ENCODE measurements at regions of chrX and their contacts with region 1.

Region 1: DNA sequence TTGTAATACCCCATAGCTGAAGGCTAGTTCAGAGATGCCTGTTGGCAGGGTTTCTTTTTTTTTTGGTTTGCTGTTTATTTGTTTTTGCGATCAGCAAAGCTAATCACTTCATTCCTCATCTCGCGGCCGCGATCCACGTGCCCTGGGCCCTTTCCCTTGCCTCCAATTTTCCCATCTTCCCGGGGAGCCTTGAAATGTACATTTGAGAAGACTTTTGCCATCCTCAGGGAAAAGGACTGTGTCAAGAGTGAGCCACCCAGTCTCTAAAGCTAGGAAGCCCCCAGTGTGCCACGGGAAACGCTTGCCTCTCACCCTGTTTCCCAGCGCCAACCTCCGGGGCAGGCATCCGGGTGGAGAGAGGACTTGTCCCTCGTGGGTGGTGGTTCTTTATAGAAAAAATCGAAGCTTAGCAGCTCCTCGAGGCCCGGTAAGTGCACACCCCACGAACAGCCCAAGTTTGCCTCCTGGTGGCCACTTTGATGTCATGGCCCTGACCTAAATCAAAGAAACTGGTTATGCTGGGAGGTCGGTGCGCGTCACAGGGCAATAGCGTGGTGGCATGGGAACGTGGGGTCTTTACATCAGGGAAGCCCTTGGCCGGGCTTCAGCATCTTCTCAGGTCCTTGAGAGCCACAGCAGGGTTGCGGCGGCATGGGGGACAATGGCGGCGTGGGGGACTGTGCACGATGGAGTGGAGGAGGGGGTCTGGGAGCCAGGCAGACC is 42.0 kb downstream of the MAP7D3 start:
- DNase-seq: peak; percentile 71 to 81
- ATAC-seq: peak; percentile 57
- H3K4me3 ChIP-seq: no peak overlapping the region
- H3K27ac ChIP-seq: peak overlapping the region in 1 of 2 donors; percentile 68
- H3K4me1 ChIP-seq: no peaks in the 10 kb centered on the region
- H3K27me3 ChIP-seq: no peaks in the 10 kb centered on the region

Region 2: GRCh38 chrX:136259543-136259942 is 50.4 kb after region 1 on chrX:
- intact Hi-C with region 1: loop called (anchors 5 to 10 kb)
- DNase-seq: no peak
- ATAC-seq: peak; percentile 45
- H3K4me3 ChIP-seq: no peak overlapping the region
- H3K27ac ChIP-seq: peak overlapping the region in 1 of 2 donors; percentile 96
- H3K4me1 ChIP-seq: no peaks in the 10 kb centered on the region
- H3K27me3 ChIP-seq: no peaks in the 10 kb centered on the region

Measured in aorta (tissue), 5 donors.